ENCODE measurements at regions of chr9 and their contacts with region 1.

Region 1: GRCh38 chr9:34899535-34900158 is 58.4 kb upstream of the PHF24 start:
- DNase-seq: peak; percentile 71 to 76
- ATAC-seq: peak; percentile 97 to 100 (median 98)
- H3K4me3 ChIP-seq: no peak overlapping the region
- H3K27ac ChIP-seq: no peak overlapping the region
- H3K4me1 ChIP-seq: no peaks in the 10 kb centered on the region
- H3K27me3 ChIP-seq: peaks cover 0 to 37% (median 25%) of the 10 kb centered on the region in 7 donors
- CTCF ChIP-seq: peak; percentile 49 to 91 (median 87)

Region 2: DNA sequence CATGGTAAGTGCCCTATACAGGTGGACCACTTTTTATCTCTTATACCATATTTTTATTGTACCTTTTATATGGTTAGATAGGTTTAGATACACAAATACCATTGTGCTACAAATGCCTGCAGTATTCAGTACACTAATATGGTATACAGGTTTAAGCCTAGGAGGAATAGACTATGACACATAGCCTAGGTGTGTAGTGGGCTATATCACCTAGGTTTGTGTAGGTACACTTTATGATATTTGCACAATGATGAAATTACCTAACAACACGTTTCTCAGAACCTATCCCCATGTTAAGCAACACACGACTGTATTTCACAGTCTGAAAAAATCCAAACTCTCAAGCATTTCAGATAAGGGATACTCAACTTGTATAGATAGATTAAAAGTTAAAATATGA is 48.8 kb after region 1 on chr9:
- intact Hi-C with region 1: no loop called
- DNase-seq: no peak
- ATAC-seq: no peak
- H3K4me3 ChIP-seq: no peak overlapping the region
- H3K27ac ChIP-seq: no peak overlapping the region
- H3K4me1 ChIP-seq: no peaks in the 10 kb centered on the region
- H3K27me3 ChIP-seq: peaks cover 0 to 42% (median 0%) of the 10 kb centered on the region in 7 donors
- CTCF ChIP-seq: no peak

Region 3: GRCh38 chr9:34974664-34975063 is 75.0 kb after region 1 on chr9:
- intact Hi-C with region 1: loop called in 1 of 10 experiments (anchors 5 kb)
- DNase-seq: no peak
- ATAC-seq: no peak
- H3K4me3 ChIP-seq: no peak overlapping the region
- H3K27ac ChIP-seq: no peak overlapping the region
- H3K4me1 ChIP-seq: no peaks in the 10 kb centered on the region
- H3K27me3 ChIP-seq: peaks cover 0 to 4% (median 0%) of the 10 kb centered on the region in 7 donors
- CTCF ChIP-seq: no peak

Region 4: DNA sequence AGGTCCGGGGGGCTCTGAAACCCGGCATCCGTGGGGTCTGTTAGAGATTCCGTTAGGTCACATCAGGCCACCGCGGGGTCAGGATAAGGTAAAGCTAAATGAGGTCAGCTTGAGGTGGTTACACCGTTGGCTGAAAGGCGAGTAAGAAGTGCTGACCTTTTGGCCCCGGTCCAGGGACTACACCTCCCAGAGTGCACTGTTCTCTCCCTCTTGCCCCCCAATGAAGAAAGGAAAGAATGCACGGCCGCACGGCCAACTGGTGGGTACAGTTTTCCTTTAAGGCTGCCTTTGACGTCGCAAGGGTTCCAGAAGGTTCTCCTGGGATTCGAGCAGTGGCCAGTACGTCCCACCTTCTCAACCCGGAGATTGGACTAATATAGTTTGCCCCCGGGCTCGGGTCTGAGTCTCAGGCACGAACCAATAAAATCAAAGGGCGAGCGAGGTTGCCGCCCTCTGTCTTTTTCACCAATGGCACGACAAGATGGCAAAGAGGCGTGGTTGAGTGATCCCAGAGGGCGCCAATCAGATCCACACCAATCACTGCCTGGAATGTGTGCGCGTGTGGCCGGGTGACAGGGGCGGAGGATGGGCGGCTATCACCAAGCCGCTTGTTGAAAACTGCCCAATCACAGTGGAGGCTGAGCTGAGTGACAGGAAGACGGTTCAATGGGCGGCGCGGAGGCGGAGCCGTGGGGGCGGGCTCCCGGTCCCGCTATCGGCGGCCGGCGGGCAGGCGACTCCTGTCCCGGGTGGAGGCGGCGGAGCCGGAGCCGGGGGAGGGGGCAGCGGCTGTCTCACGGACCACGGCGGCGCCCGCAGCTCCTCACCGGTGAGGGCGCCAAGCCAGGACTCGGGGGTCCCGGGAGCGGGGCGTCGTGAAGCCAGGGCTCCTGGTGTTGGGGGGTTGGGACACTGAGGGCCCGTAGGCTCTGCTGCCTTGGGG is 89.6 kb after region 1 on chr9 and contains the start of gene DNAJB5:
- intact Hi-C with region 1: loop called in 9 of 10 experiments (anchors 1 to 5 kb)
- DNase-seq: peak; percentile 97 to 100
- ATAC-seq: peak; percentile 80 to 90 (median 84)
- H3K4me3 ChIP-seq: peak within 1 kb of the TSS; percentile 37 to 91 (median 77)
- H3K27ac ChIP-seq: peak within 1 kb of the TSS; percentile 72 to 99 (median 94)
- H3K4me1 ChIP-seq: peaks cover 19 to 62% (median 49%) of the 10 kb centered on the region in 9 donors
- H3K27me3 ChIP-seq: no peaks in the 10 kb centered on the region
- CTCF ChIP-seq: no peak
- total RNA-seq, gene DNAJB5: 49.0 to 206 (median 85.1) TPM

Region 5: GRCh38 chr9:35051069-35051967 is 151.7 kb after region 1 on chr9:
- intact Hi-C with region 1: loop called in 4 of 10 experiments (anchors 1 to 10 kb)
- DNase-seq: peak in 1 of 2 donors; percentile 44
- ATAC-seq: peak; percentile 62 to 96 (median 80)
- H3K4me3 ChIP-seq: no peak overlapping the region
- H3K27ac ChIP-seq: peak overlapping the region in 7 of 10 donors; percentile 16 to 68 (median 35)
- H3K4me1 ChIP-seq: peaks cover 0 to 15% (median 7%) of the 10 kb centered on the region in 9 donors
- H3K27me3 ChIP-seq: no peaks in the 10 kb centered on the region
- CTCF ChIP-seq: peak; percentile 26 to 70 (median 65)

Region 6: GRCh38 chr9:35333551-35333950 is 433.9 kb after region 1 on chr9:
- intact Hi-C with region 1: no loop called
- DNase-seq: no peak
- ATAC-seq: no peak
- H3K4me3 ChIP-seq: no peak overlapping the region
- H3K27ac ChIP-seq: no peak overlapping the region
- H3K4me1 ChIP-seq: no peaks in the 10 kb centered on the region
- H3K27me3 ChIP-seq: no peaks in the 10 kb centered on the region
- CTCF ChIP-seq: no peak

Region 7: DNA sequence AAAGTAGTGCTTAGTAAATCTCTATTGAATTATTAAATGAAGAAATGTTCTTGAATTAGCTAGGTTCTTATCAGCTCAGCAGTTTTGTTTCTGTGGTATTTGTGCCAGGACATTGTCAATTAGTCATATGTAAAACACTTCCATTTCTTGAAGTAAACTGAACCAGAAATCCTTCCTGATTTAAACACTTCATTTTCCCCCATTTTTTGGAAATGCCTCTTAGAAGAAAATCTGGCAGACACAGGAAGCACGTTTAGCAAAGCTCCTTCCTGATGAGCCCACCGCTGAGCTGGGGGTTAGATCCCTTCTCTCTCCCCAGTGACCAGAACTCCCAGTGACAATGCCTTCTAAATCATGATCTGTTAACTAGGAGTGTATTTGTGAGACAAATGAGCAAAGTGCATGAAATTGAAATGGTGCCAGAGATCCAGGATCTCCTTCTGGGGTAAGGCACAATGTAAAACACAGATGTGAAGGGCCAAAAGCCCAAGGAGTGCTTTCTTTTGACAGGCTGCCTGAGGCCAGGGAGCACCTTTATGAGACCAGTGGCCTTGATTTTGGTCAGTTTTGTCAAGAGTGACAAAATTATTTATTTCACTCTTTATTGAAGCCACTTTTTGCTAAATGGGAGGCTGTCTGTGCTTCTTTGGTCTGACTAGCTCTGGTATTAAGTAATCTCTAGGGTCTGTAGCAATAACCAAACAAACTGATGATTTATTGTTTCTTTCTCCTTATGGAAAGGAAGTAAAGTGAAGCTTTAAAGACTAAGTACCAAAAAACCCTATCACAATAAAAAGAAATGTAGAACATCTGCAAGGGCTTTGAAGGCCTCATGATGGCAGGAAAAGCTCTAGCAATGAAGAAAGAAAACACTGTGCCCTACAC is 564.7 kb after region 1 on chr9:
- intact Hi-C with region 1: loop called in 1 of 10 experiments (anchors 10 kb)
- DNase-seq: no peak
- ATAC-seq: no peak
- H3K4me3 ChIP-seq: no peak overlapping the region
- H3K27ac ChIP-seq: no peak overlapping the region
- H3K4me1 ChIP-seq: peaks cover 0 to 6% (median 0%) of the 10 kb centered on the region in 9 donors
- H3K27me3 ChIP-seq: no peaks in the 10 kb centered on the region
- CTCF ChIP-seq: no peak